ENCODE measurements at regions of chr20 and their contacts with region 1.

Region 1: GRCh38 chr20:44080646-44081267 is 106.2 kb downstream of the JPH2 start:
- DNase-seq: no peak
- H3K4me3 ChIP-seq: no peak overlapping the region
- CTCF ChIP-seq: peak; percentile 83

Region 2: DNA sequence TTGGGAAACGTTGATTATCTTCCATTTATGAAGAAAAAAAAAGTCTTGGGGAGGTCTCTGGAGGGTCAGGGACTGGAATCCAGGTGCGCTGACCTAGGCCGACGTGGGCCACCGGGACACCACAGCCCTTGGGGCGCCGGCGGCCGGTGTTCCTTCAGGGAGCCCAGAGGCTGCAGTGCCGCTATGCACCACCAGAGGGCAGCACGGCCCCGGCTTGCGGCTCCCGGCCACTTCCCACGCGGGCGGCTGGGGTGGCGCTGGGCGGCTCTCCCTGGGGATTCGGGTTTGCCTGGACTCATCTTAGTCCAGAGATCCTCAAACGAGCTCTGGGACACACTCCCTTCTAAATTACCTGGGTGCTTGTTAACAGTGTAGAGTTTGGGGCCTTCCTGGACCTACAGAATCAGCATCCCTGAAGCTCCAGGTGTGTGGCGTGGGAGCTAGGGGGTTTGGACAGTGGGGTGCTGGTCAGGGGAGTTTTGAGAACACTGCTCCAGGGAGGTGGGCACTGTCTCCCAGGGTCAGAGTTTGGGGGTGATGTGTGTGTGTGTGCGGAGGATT is 330.9 kb before region 1 on chr20:
- CTCF ChIA-PET with region 1: interaction called, 453 read pairs
- POLR2A ChIA-PET with region 1: no interaction called
- DNase-seq: no peak
- H3K4me3 ChIP-seq: no peak overlapping the region
- CTCF ChIP-seq: peak; percentile 99

Region 3: DNA sequence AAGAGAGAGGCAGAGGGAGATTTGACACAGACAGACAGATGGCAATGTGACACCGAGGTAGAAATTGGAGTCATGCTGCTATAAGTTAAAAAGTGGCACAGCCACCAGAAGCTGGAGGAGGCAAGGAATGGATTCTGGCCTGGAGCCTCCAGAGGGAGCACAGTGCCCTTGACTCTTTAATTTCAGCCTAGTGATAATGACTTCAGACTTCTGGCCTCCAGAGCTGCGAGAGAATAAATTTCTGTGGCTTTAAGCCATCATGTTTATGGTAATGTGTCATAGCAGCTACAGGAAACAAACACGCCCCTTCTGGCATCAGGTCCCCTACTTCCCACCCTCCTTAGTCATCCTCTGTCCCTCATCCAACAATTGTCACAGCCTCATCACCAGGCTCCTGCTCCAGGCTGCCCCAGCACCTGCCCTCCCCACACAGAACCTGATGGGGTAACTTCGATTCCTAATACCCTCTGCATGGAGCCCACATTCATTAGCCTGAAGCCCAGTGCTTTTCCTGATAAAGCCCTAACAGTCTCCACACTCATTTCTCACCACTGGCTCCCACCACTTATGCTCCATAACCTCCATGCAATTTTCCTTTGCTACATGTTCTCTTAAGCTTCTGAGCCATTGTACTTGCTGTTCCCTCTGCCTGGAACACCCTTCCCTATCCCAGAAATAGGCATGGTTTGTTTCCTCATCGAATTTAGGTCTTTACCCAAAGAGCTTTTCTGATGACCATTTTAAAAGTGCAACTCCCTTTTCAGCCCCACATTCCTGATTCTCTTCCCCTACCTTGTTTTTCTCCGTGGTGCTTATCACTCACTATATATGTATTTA is 235.8 kb before region 1 on chr20:
- CTCF ChIA-PET with region 1: interaction called, 14 read pairs
- POLR2A ChIA-PET with region 1: no interaction called
- DNase-seq: peak; percentile 77
- H3K4me3 ChIP-seq: no peak overlapping the region
- CTCF ChIP-seq: peak; percentile 47

Region 4: GRCh38 chr20:44057698-44058675 is 22.8 kb before region 1 on chr20:
- CTCF ChIA-PET with region 1: interaction called, 13 read pairs
- POLR2A ChIA-PET with region 1: no interaction called
- DNase-seq: no peak
- H3K4me3 ChIP-seq: no peak overlapping the region
- CTCF ChIP-seq: no peak

Region 5: DNA sequence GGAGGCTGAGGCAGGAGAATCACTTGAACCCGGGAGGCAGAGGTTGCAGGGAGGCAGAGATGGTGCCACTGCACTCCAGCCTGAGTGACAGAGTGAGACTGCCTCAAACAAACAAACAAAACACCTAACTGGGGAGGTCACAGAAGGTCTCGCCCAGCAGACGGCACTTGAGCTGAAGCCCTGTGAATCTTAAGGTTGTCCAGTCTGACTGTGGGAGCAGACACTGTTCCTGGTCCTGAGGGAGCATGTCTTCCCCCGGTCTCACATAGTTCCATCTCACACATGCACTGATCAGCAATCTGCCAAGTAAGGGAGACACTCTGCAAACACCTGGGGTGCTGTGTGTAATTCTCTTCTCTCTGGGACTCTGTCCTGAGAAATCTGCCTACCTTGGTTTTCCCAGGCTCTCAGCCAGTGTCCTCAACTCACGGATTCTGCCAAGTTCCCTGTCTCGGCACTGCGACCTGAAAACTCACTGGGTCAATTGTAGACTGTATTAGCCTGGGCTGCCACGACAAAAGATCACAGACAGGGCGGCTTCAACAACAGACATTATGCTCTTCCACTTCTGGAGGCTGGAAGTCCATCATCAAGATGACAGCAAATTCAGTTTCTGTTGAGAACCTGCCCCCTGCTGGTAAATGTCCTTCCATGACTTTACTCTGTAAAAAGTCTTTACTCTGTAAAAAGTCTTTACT is 11.9 kb after region 1 on chr20:
- CTCF ChIA-PET with region 1: interaction called, 13 read pairs
- POLR2A ChIA-PET with region 1: no interaction called
- DNase-seq: no peak
- H3K4me3 ChIP-seq: no peak overlapping the region
- CTCF ChIP-seq: peak; percentile 33

Region 6: DNA sequence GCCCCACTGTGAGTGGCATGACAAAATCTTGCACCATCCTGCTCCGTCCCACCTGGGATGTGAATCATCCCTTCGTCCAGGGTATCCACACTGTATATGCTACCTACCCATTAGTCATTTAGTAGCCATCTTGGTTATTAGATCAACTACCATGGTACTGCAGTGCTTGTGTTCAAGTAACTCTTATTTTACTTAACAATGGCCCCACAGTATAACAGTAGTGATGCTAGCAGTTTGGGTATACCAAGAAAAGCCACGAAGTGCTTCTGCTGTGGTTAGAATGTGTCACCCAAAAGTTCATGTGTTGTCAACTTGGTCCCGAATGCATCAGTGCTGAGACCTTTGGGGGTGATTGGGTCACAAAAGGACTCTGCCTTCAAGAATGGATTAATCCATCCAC is 118.1 kb after region 1 on chr20:
- CTCF ChIA-PET with region 1: no interaction called
- POLR2A ChIA-PET with region 1: no interaction called
- DNase-seq: no peak
- H3K4me3 ChIP-seq: no peak overlapping the region
- CTCF ChIP-seq: no peak